Calu3 (cell line): ENCODE measurements at regions of chr19 and their contacts with region 1.

Region 1: GRCh38 chr19:35066691-35067563 is 25.4 kb downstream of the HPN start:
- DNase-seq: peak; percentile 97
- H3K4me3 Mint-ChIP-seq: no peak overlapping the region
- H3K27ac Mint-ChIP-seq: no peak overlapping the region
- H3K4me1 Mint-ChIP-seq: peaks cover 34% of the 10 kb centered on the region
- H3K27me3 Mint-ChIP-seq: no peaks in the 10 kb centered on the region
- CTCF ChIP-seq: peak; percentile 96

Region 2: DNA sequence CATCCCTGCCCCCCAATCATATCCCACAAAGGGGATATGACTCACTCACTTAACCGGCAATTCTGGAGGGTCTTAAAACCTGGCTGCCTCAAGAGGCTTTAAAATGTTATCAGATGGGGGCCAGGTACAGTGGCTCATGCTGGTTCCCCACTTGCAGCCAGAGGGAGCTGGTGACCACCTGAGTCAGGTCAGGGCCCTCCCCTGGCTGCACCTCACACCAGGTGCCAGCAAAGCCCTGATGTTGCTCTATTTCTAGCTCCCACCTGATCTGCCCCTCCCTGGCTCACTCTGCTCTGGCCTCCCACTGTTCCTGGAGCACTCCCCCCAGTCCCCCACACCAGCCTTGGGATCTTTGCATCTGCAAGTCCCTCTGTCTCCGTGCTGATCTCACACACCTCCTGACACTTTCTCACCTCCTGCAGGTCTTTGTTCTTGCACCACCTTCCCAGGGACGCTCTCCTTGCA is 11.2 kb before region 1 on chr19:
- CTCF ChIA-PET with region 1: interaction called, 12 read pairs
- intact Hi-C with region 1: no loop called
- DNase-seq: peak; percentile 77
- H3K4me3 Mint-ChIP-seq: no peak overlapping the region
- H3K27ac Mint-ChIP-seq: no peak overlapping the region
- H3K4me1 Mint-ChIP-seq: peaks cover 9% of the 10 kb centered on the region
- H3K27me3 Mint-ChIP-seq: no peaks in the 10 kb centered on the region
- CTCF ChIP-seq: peak; percentile 77

Region 3: GRCh38 chr19:35090506-35091237 is 23.7 kb after region 1 on chr19:
- CTCF ChIA-PET with region 1: interaction called, 4 read pairs
- intact Hi-C with region 1: loop called (anchors 1 kb)
- DNase-seq: peak; percentile 83
- H3K4me3 Mint-ChIP-seq: peak overlapping the region; percentile 46
- H3K27ac Mint-ChIP-seq: peak overlapping the region; percentile 48
- H3K4me1 Mint-ChIP-seq: peaks cover 49% of the 10 kb centered on the region
- H3K27me3 Mint-ChIP-seq: no peaks in the 10 kb centered on the region
- CTCF ChIP-seq: peak; percentile 89

Region 4: GRCh38 chr19:35114353-35115176 is 47.6 kb after region 1 on chr19:
- CTCF ChIA-PET with region 1: interaction called, 14 read pairs
- intact Hi-C with region 1: no loop called
- DNase-seq: peak; percentile 85
- H3K4me3 Mint-ChIP-seq: peak overlapping the region; percentile 74
- H3K27ac Mint-ChIP-seq: peak overlapping the region; percentile 53
- H3K4me1 Mint-ChIP-seq: peaks cover 47% of the 10 kb centered on the region
- H3K27me3 Mint-ChIP-seq: no peaks in the 10 kb centered on the region
- CTCF ChIP-seq: peak; percentile 100

Region 5: DNA sequence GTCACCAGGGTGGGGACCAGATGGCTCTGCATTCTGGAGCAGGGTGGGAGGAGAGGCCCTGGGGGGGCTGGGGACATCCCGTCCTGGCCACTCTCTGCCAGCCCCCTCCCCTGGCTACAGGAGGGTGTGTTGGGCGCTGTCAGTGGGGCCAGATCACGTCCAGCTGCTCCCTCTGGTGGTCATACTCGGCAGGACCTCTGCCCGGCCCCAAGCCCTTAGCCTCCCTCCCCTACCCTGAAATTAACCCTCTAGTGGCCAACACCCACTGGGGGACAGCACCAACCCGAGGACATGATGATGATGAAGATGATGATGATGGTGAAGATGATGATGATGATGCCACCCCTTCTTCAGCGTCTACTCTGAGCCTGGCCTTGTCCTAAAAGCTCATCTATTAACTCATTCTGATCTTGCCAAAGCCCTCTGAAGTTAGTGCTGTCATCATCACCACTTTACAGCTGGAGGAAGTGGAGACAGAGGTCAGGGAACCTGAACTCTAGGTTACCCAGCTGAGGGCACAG is 68.5 kb after region 1 on chr19:
- CTCF ChIA-PET with region 1: interaction called, 7 read pairs
- intact Hi-C with region 1: loop called (anchors 1 kb)
- DNase-seq: peak; percentile 89
- H3K4me3 Mint-ChIP-seq: no peak overlapping the region
- H3K27ac Mint-ChIP-seq: no peak overlapping the region
- H3K4me1 Mint-ChIP-seq: peaks cover 27% of the 10 kb centered on the region
- H3K27me3 Mint-ChIP-seq: no peaks in the 10 kb centered on the region
- CTCF ChIP-seq: peak; percentile 98

Region 6: DNA sequence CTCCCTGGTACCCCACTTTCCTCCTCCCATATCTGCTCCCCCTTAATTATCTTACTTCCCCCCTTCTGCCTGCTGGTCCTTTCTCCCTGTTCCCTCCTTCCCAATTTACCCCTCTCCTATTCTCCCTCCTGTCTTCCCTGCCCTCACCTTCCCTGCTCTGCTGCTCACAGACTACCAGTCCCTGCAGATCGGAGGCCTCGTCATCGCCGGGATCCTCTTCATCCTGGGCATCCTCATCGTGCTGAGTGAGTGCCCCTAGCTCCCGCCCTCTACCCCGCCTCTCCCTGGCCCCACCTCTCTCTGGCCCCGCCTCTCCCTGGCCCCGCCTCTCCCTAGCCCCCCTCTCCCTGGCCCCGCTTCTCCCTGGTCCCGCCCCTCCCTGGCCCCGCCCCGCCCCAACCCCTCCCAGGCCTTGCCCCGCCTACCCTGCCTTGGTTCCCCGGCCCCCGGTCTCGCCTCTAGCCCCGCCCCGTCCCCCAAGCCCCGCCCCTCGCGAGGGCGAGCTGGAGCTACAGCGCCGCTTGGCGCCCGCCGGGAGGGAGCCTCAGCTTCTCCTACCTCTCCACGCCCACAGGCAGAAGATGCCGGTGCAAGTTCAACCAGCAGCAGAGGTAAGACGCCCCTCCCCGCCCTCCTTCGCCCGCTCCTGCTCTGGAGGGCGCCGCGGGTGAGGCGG is 74.2 kb after region 1 on chr19:
- CTCF ChIA-PET with region 1: interaction called, 31 read pairs
- intact Hi-C with region 1: no loop called
- DNase-seq: peak; percentile 97
- H3K4me3 Mint-ChIP-seq: peak overlapping the region; percentile 46
- H3K27ac Mint-ChIP-seq: no peak overlapping the region
- H3K4me1 Mint-ChIP-seq: peaks cover 52% of the 10 kb centered on the region
- H3K27me3 Mint-ChIP-seq: peaks cover 17% of the 10 kb centered on the region
- CTCF ChIP-seq: peak; percentile 31

Region 7: GRCh38 chr19:35213663-35214632 is 147.0 kb after region 1 on chr19:
- CTCF ChIA-PET with region 1: interaction called, 9 read pairs
- intact Hi-C with region 1: loop called (anchors 10 kb)
- DNase-seq: peak; percentile 86
- H3K4me3 Mint-ChIP-seq: peak overlapping the region; percentile 39
- H3K27ac Mint-ChIP-seq: peak overlapping the region; percentile 75
- H3K4me1 Mint-ChIP-seq: peaks cover 22% of the 10 kb centered on the region
- H3K27me3 Mint-ChIP-seq: no peaks in the 10 kb centered on the region
- CTCF ChIP-seq: no peak

Region 8: GRCh38 chr19:35236638-35237400 is 169.9 kb after region 1 on chr19:
- CTCF ChIA-PET with region 1: no interaction called
- intact Hi-C with region 1: no loop called
- DNase-seq: no peak
- H3K4me3 Mint-ChIP-seq: no peak overlapping the region
- H3K27ac Mint-ChIP-seq: no peak overlapping the region
- H3K4me1 Mint-ChIP-seq: no peaks in the 10 kb centered on the region
- H3K27me3 Mint-ChIP-seq: no peaks in the 10 kb centered on the region
- CTCF ChIP-seq: no peak

Region 9: GRCh38 chr19:35347171-35347929 is 280.4 kb after region 1 on chr19 and contains the start of gene FFAR1:
- CTCF ChIA-PET with region 1: no interaction called
- intact Hi-C with region 1: no loop called
- DNase-seq: no peak
- H3K4me3 Mint-ChIP-seq: no peak within 1 kb of the TSS
- H3K27ac Mint-ChIP-seq: no peak within 1 kb of the TSS
- H3K4me1 Mint-ChIP-seq: no peaks in the 10 kb centered on the region
- H3K27me3 Mint-ChIP-seq: peaks cover 69% of the 10 kb centered on the region
- CTCF ChIP-seq: no peak
- total RNA-seq, gene FFAR1: not detected in 2 replicates